IMR-90 (cell line): ENCODE measurements at regions of chr11 and their contacts with region 1.

Region 1: DNA sequence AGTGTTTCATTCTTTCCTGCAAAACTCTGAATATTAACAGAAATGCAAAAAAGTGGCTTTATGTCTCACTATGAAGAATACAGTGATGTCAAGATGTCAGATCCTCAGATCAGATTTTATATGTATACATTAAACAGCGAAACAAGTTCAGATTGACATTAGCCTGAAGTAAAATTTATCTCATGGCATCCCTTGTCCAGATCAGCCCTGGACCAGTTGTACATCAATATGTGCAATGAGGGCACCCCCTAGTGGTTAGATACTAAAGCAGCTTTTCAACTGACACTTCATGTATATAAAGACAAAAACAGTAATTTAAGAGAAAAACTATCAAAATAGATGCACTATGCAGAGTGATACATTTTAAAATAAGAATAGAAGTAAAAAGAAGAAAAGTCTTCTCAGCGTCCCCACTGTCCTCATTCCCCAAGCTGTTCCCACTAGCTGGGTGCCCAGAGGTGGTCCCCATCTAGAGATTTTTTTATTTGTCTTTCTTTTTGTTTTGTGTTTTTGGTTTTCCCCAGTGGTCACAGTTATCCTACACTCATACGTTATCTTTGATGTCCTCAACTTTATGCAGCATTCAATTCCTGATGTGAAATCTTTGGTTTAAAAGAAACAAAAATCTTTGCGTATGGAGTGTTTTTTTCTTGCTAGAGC is 2193.4 kb upstream of the RAG2 start:
- DNase-seq: peak; percentile 58
- ATAC-seq: peak; percentile 71
- H3K4me3 ChIP-seq: no peak overlapping the region
- H3K27ac ChIP-seq: no peak overlapping the region
- H3K4me1 ChIP-seq: no peaks in the 10 kb centered on the region
- H3K27me3 ChIP-seq: no peaks in the 10 kb centered on the region
- CTCF ChIP-seq: peak; percentile 77
- POLR2A ChIP-seq: no peak
- RAD21 ChIP-seq: peak; percentile 83

Region 2: GRCh38 chr11:37449146-37449545 is 1342.3 kb before region 1 on chr11:
- CTCF ChIA-PET with region 1: no interaction called
- POLR2A ChIA-PET with region 1: no interaction called
- dilution Hi-C with region 1: no loop called
- in situ Hi-C with region 1: loop called (anchors 25 kb)
- intact Hi-C with region 1: loop called (anchors 1 kb)
- DNase-seq: peak; percentile 68
- ATAC-seq: peak; percentile 84
- H3K4me3 ChIP-seq: no peak overlapping the region
- H3K27ac ChIP-seq: no peak overlapping the region
- H3K4me1 ChIP-seq: 0 out of 2 replicates have a peak, but pooled peaks cover 3% of the 10 kb centered on the region
- H3K27me3 ChIP-seq: no peaks in the 10 kb centered on the region
- CTCF ChIP-seq: peak; percentile 74
- POLR2A ChIP-seq: no peak
- RAD21 ChIP-seq: peak; percentile 80

Region 3: GRCh38 chr11:37630866-37631265 is 1160.6 kb before region 1 on chr11:
- CTCF ChIA-PET with region 1: no interaction called
- POLR2A ChIA-PET with region 1: no interaction called
- dilution Hi-C with region 1: no loop called
- in situ Hi-C with region 1: loop called (anchors 25 kb)
- intact Hi-C with region 1: no loop called
- DNase-seq: no peak
- ATAC-seq: no peak
- H3K4me3 ChIP-seq: no peak overlapping the region
- H3K27ac ChIP-seq: no peak overlapping the region
- H3K4me1 ChIP-seq: no peaks in the 10 kb centered on the region
- H3K27me3 ChIP-seq: no peaks in the 10 kb centered on the region
- CTCF ChIP-seq: no peak
- POLR2A ChIP-seq: no peak
- RAD21 ChIP-seq: no peak

Region 4: GRCh38 chr11:37946155-37946766 is 845.2 kb before region 1 on chr11:
- CTCF ChIA-PET with region 1: interaction called, 7 read pairs
- POLR2A ChIA-PET with region 1: no interaction called
- dilution Hi-C with region 1: no loop called
- in situ Hi-C with region 1: loop called (anchors 25 kb)
- intact Hi-C with region 1: loop called (anchors 1 kb)
- DNase-seq: peak; percentile 27
- ATAC-seq: peak; percentile 91
- H3K4me3 ChIP-seq: no peak overlapping the region
- H3K27ac ChIP-seq: no peak overlapping the region
- H3K4me1 ChIP-seq: no peaks in the 10 kb centered on the region
- H3K27me3 ChIP-seq: no peaks in the 10 kb centered on the region
- CTCF ChIP-seq: peak; percentile 64
- POLR2A ChIP-seq: no peak
- RAD21 ChIP-seq: peak; percentile 54

Region 5: DNA sequence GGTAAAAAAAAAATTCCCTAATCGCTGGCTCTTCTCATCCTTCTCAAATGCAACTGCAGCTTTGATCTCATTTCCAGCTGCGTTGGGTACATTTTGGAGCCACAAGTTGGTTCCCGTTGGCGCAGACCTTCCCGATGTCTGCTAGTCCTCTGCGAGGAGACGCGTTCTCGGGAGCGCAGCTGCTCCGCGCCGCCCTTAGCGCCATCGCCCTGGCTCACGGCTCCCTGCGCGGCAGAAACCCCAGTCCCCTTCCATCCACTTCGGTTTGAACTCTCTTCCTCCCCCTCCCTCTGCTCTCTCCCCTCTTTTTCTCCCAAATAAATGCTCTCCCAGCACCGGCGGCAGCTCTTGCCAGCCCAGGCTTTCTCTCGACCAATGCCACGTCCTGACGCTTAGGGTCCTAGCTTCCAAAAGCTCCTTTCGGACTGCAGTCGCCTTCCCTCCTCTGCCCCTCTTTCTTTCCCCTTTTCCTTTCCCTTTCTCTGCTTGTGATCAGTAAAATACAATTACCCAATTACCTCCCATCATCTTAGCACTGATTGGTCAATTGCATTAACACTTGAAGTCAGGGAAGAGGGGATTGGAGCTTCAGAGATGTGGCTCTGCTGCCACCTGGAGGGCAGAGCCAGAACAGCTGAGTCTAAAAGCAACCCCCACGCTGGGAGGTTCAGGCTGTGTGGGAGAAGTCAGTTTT is 1502.4 kb after region 1 on chr11:
- CTCF ChIA-PET with region 1: no interaction called
- POLR2A ChIA-PET with region 1: no interaction called
- dilution Hi-C with region 1: no loop called
- in situ Hi-C with region 1: no loop called
- intact Hi-C with region 1: loop called (anchors 10 kb)
- DNase-seq: peak; percentile 92
- ATAC-seq: peak; percentile 99
- H3K4me3 ChIP-seq: peak overlapping the region; percentile 63
- H3K27ac ChIP-seq: peak overlapping the region; percentile 22; the same call in 1 of the 2 replicates
- H3K4me1 ChIP-seq: no peaks in the 10 kb centered on the region
- H3K27me3 ChIP-seq: peaks cover 7% of the 10 kb centered on the region; the same call in 1 of the 2 replicates
- CTCF ChIP-seq: peak; percentile 95
- POLR2A ChIP-seq: no peak
- RAD21 ChIP-seq: peak; percentile 77